ENCODE measurements at regions of chrX and their contacts with region 1.

Region 1: DNA sequence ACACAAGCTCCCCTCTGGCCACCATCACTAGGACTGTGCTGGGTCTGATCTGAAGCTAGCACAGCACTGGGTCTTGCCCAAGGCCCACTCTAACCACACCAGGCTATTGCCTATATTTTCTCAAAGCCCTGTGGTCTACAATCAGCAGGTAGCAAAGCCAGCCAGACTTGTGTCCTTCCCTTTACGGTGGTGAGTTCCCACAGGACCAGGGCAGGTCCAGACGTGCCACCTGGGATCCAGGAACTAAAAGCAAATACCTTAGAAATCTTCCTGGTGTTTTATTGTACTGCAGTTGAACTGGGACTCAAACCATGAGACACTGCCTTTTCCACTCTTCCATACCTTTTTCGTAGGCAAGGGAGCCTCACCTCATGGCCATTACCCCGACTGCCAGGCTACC is 9.0 kb upstream of the MAGEC2 start:
- DNase-seq: no peak
- ATAC-seq: no peak
- H3K4me3 Mint-ChIP-seq: no peak overlapping the region
- H3K27ac Mint-ChIP-seq: no peak overlapping the region
- H3K4me1 Mint-ChIP-seq: no peaks in the 10 kb centered on the region
- H3K27me3 Mint-ChIP-seq: no peaks in the 10 kb centered on the region

Region 2: DNA sequence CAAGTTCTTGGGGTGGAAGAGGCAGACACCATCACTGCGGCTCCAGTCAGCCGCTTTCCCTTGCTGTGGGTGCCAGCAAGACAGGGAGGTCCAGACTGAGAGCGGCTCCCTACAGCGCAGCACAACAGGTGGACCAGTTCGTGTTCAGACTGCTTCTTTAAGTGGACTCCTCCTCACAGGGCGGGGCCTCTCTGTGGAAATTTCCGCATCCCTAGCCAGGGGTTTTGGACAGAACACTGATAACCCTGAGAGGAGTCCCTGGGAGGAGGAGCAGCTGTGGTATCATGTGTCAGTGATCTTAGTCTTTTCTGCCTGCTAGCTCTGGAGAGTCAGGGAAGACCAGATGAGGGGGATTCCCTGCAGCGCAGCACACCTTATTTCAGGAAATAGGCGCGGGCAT is 57.5 kb before region 1 on chrX:
- CTCF ChIA-PET with region 1: no interaction called
- POLR2A ChIA-PET with region 1: no interaction called
- intact Hi-C with region 1: loop called in 1 of 2 experiments (anchors 10 kb)
- DNase-seq: no peak
- ATAC-seq: no peak
- H3K4me3 Mint-ChIP-seq: no peak overlapping the region
- H3K27ac Mint-ChIP-seq: no peak overlapping the region
- H3K4me1 Mint-ChIP-seq: no peaks in the 10 kb centered on the region
- H3K27me3 Mint-ChIP-seq: no peaks in the 10 kb centered on the region